ENCODE measurements at regions of chr9 and their contacts with region 1.

Region 1: GRCh38 chr9:95462249-95463147 is 54.3 kb downstream of the PTCH1 start:
- DNase-seq: peak; percentile 82
- H3K4me3 ChIP-seq: peak overlapping the region in 2 of 3 experiments; percentile 5 to 23
- H3K27ac ChIP-seq: peak overlapping the region; percentile 39
- H3K4me1 ChIP-seq: peaks cover 9% of the 10 kb centered on the region
- H3K27me3 ChIP-seq: no peaks in the 10 kb centered on the region
- CTCF ChIP-seq: no peak
- POLR2A ChIP-seq: no peak

Region 2: DNA sequence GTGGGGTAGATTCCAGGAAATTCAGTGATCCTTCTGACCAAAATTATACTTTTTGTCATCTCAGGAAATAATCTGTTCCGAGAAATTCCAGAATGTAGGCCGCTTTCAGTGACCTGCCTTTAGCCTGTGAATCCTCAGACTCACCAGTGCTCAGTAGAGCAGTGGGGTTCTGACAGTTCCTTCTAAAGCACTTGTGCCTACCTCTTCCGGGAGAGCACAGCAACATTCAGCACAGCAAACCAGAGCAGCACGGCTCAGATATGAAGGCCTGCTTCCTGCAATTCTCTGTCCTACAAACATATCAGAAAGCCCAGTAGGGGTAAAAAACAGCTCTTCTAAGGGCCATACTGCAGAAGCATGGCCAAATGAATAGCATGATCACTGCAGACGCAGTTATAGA is 160.0 kb before region 1 on chr9:
- CTCF ChIA-PET with region 1: no interaction called
- POLR2A ChIA-PET with region 1: no interaction called
- dilution Hi-C with region 1: no loop called
- intact Hi-C with region 1: no loop called
- DNase-seq: peak; percentile 11
- H3K4me3 ChIP-seq: no peak overlapping the region
- H3K27ac ChIP-seq: no peak overlapping the region
- H3K4me1 ChIP-seq: peaks cover 26% of the 10 kb centered on the region
- H3K27me3 ChIP-seq: no peaks in the 10 kb centered on the region
- CTCF ChIP-seq: no peak
- POLR2A ChIP-seq: no peak

Region 3: GRCh38 chr9:95425910-95426551 is 36.5 kb before region 1 on chr9:
- CTCF ChIA-PET with region 1: no interaction called
- POLR2A ChIA-PET with region 1: no interaction called
- dilution Hi-C with region 1: no loop called
- intact Hi-C with region 1: loop called (anchors 2 kb)
- DNase-seq: no peak
- H3K4me3 ChIP-seq: peak overlapping the region in 1 of 3 experiments; percentile 30
- H3K27ac ChIP-seq: no peak overlapping the region
- H3K4me1 ChIP-seq: peaks cover 9% of the 10 kb centered on the region
- H3K27me3 ChIP-seq: no peaks in the 10 kb centered on the region
- CTCF ChIP-seq: no peak
- POLR2A ChIP-seq: no peak

Region 4: DNA sequence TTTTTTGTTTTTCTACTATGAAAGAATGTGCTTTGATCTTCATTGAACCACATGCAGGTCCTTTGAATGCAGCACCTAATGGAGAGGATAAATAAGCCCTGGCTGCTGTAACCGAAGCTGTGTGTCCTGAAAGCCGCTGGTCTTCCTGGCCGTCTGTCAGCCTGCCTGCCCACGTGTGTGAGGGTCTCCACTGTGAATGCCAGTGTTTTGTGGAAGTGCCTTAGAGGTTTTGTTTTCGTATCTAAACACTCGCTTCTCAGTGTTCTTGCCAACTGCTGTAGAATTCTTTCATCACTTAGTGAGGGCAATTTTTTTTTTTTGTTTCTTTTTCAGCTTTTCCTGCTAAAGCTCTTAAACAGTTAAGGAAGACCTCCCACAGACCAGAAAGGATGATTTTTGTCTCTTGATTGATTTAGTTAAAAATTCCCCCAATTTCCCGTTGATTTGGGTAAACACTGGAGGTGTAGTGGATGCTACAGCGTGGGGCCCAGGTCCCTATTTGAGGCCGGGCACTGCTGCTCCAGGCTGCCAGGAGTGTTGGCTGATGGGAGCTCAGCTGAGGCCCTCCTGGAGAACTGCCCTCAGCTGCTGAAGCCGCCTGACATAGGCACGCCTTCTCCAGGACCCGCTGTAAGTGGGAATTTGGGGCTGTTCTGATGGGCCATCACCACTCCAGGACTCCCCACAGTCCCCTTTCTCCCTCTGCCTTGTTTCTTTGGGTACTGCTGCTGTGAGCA is 83.5 kb after region 1 on chr9:
- CTCF ChIA-PET with region 1: no interaction called
- POLR2A ChIA-PET with region 1: no interaction called
- dilution Hi-C with region 1: no loop called
- intact Hi-C with region 1: no loop called
- DNase-seq: no peak
- H3K4me3 ChIP-seq: no peak overlapping the region
- H3K27ac ChIP-seq: no peak overlapping the region
- H3K4me1 ChIP-seq: no peaks in the 10 kb centered on the region
- H3K27me3 ChIP-seq: peaks cover 1 to 6% of the 10 kb centered on the region in 2 experiments
- CTCF ChIP-seq: no peak
- POLR2A ChIP-seq: no peak